Gastrocnemius medialis (tissue), 4 donors: ENCODE measurements at regions of chr6 and their contacts with region 1.

Region 1: GRCh38 chr6:132962936-132963868 is 148.8 kb downstream of the RPS12 start:
- DNase-seq: peak; percentile 50 to 68
- ATAC-seq: peak; percentile 63 to 87
- H3K4me3 ChIP-seq: no peak overlapping the region
- H3K27ac ChIP-seq: no peak overlapping the region
- H3K4me1 ChIP-seq: peaks cover 19 to 23% of the 10 kb centered on the region in 2 donors
- H3K27me3 ChIP-seq: no peaks in the 10 kb centered on the region
- CTCF ChIP-seq: peak; percentile 57 to 76 (median 70)
- POLR2A ChIP-seq: no peak

Region 2: DNA sequence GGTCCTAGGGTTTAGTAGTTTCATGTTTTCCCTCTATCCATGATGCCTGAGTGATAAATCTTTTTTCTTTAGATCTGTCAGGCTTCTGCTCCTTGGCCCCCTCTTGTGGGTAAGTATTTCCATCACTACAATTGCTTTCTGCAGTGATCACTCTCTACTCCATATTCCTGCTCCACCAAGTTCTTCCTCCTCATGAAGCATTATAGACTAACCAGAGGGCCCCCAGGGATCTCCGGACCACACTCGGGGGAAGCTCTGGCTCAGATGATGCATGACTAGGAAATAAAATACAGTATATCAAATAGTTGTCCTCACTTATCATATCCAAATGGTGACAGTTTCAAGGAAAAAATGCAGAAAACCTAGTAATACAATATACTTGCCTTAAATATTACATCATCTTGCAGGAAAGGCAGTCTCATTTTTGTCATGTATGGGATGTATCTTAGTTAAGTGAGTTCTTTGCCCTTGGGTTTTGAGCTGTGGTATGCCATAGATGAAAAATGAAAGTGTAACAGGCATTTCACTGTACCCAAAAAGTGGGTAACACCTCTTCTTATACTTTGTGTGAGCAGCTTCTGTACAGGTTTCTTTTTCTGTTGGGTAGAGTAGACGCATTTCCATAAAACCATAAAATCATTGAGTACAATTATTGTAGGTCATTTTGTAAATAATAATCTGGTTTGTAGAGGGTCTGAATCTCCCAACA is 77.0 kb after region 1 on chr6:
- in situ Hi-C with region 1: no loop called
- intact Hi-C with region 1: loop called (anchors 1 kb)
- DNase-seq: no peak
- ATAC-seq: peak in 1 of 2 donors; percentile 19
- H3K4me3 ChIP-seq: no peak overlapping the region
- H3K27ac ChIP-seq: no peak overlapping the region
- H3K4me1 ChIP-seq: no peaks in the 10 kb centered on the region
- H3K27me3 ChIP-seq: no peaks in the 10 kb centered on the region
- CTCF ChIP-seq: peak in 3 of 5 experiments; percentile 18 to 50 (median 26)
- POLR2A ChIP-seq: no peak

Region 3: DNA sequence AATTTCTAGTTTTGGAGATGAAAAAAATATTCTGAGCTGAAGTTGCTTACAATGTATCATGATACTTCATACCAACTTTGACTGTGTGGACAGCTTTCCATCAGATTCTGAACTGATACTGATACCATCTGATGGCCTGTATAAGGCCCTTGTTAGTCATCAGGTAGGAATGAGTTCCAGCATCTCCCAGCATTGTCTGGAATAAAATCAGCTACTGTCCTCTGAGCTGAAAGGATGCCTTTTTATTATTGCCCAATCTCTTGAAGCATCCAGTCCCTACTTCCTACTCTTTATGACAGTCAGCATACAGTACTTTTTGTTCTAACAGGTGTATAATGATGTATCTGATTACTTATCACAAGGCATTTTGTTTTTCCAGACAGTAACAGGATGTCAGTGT is 207.4 kb after region 1 on chr6:
- in situ Hi-C with region 1: loop called in 2 of 4 experiments (anchors 10 to 25 kb)
- intact Hi-C with region 1: loop called (anchors 5 kb)
- DNase-seq: peak in 1 of 2 donors; percentile 32
- ATAC-seq: peak; percentile 94 to 96
- H3K4me3 ChIP-seq: no peak overlapping the region
- H3K27ac ChIP-seq: peak overlapping the region in 2 of 4 donors; percentile 51 to 77
- H3K4me1 ChIP-seq: peaks cover 5 to 7% of the 10 kb centered on the region in 2 donors
- H3K27me3 ChIP-seq: no peaks in the 10 kb centered on the region
- CTCF ChIP-seq: no peak
- POLR2A ChIP-seq: no peak

Region 4: GRCh38 chr6:133179481-133179880 is 216.3 kb after region 1 on chr6:
- in situ Hi-C with region 1: loop called in 2 of 4 experiments (anchors 10 to 25 kb)
- intact Hi-C with region 1: loop called (anchors 5 kb)
- DNase-seq: no peak
- ATAC-seq: no peak
- H3K4me3 ChIP-seq: no peak overlapping the region
- H3K27ac ChIP-seq: no peak overlapping the region
- H3K4me1 ChIP-seq: no peaks in the 10 kb centered on the region
- H3K27me3 ChIP-seq: no peaks in the 10 kb centered on the region
- CTCF ChIP-seq: no peak
- POLR2A ChIP-seq: no peak

Region 5: DNA sequence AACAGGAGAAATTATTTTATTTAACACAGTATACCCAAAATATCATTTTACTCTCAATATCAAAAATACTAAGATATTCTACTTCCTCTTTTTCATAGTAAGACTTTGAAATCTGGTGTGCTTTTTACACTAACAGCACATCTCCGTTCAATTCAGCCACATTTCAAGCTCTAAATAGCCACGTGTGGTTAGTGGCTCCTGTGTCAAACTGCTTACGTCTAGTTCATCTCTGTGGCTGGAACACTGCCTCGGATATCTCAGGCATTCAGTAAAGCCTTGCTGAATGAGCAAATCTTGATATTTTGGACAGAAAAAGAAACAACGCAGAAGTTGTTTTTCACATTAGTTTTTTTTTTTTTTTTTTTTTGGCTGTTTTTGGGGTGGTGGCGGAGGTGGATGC is 414.0 kb after region 1 on chr6:
- in situ Hi-C with region 1: no loop called
- intact Hi-C with region 1: loop called (anchors 10 kb)
- DNase-seq: peak in 1 of 2 donors; percentile 42
- ATAC-seq: peak; percentile 61 to 82
- H3K4me3 ChIP-seq: no peak overlapping the region
- H3K27ac ChIP-seq: peak overlapping the region; percentile 18 to 47 (median 34)
- H3K4me1 ChIP-seq: peaks cover 39 to 54% of the 10 kb centered on the region in 2 donors
- H3K27me3 ChIP-seq: no peaks in the 10 kb centered on the region
- CTCF ChIP-seq: no peak
- POLR2A ChIP-seq: no peak

Region 6: DNA sequence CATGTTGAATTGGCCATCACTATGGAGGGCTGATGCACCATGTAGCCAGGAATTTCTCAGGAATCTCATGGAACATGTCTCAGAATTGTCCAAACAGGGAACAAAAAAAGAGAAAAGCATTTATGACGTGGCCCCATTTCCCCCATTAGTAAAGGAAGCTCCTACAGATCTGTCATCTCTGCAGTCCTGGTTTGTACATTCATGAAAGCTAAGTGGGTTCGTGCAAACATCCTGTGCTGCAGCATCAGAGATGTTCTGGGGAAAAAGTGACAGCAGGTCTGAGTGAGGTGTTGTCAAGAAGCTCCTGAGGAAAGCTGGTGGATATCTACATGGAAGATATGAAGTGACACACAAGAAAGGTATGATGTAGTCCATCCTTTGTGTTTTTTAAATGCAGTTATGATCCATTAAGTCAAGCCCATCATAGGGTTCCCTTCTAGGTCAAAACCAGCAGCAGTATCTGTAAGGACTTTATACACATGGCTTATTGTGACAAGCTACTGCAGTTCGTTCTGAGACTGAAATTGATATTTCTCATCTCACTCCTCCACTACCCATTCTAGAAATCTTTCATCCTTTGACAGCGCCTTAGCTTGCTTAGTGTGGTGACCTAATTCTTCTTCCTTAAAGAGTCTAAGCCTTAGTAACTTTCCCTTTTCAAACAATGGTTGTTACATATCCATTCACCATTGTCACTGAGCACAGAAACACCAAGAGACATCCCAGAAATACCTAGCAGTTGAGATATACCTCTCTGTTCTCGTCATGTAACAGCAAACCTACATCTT is 725.7 kb after region 1 on chr6:
- in situ Hi-C with region 1: no loop called
- intact Hi-C with region 1: no loop called
- DNase-seq: no peak
- ATAC-seq: no peak
- H3K4me3 ChIP-seq: no peak overlapping the region
- H3K27ac ChIP-seq: no peak overlapping the region
- H3K4me1 ChIP-seq: no peaks in the 10 kb centered on the region
- H3K27me3 ChIP-seq: no peaks in the 10 kb centered on the region
- CTCF ChIP-seq: no peak
- POLR2A ChIP-seq: no peak